HEK293 (cell line): ENCODE measurements at regions of chr15 and their contacts with region 1.

Region 1: GRCh38 chr15:67863442-67863987 is 23.7 kb upstream of the RNU6-1 start:
- H3K4me3 ChIP-seq: peak overlapping the region; percentile 32
- H3K27ac ChIP-seq: peak overlapping the region; percentile 19; the same call in 1 of the 2 replicates
- H3K4me1 ChIP-seq: peaks cover 2% of the 10 kb centered on the region; the same call in 1 of the 2 replicates
- CTCF ChIP-seq: peak; percentile 95

Region 2: DNA sequence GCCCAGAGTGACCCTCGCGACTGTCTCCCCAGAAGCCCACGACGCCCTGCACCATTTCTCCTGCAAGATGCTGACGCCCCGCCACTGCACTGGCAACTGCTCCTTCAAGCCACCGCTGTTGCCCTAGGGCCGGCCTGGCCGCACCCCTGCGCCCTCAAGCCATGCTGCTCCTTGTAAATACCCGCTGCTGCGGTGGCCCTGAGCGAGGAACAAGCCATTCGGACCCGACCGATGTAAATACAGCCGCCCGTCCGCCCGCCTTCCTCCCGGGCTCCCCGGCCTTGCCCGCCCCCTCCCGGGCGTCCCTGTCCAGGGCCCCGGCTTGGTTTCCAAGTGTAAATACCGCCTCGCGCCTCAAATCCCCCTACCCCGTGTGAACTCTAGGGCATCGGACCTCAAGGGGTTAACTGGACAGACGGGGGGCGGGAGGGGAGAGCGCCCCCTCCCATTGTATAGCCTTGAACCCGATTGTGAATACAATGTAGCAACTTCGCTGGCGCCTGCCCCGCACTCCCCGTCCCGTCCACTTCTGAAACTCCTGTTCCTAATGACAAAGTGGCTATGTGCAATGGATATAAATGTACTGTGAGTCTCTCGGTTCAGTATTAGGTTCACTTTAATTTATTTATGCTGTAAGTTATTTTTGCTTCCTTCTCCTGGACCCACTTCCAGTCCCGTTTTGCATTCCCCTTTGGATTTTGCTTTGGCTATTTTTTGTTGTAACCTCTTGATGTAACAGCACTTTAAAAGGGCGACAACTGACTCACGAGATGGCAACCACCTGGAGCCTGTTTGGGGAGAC is 29.6 kb before region 1 on chr15:
- CTCF ChIA-PET with region 1: no interaction called
- POLR2A ChIA-PET with region 1: no interaction called
- H3K4me3 ChIP-seq: no peak overlapping the region
- H3K27ac ChIP-seq: no peak overlapping the region
- H3K4me1 ChIP-seq: no peaks in the 10 kb centered on the region; the same call in 1 of the 2 replicates
- CTCF ChIP-seq: no peak

Region 3: DNA sequence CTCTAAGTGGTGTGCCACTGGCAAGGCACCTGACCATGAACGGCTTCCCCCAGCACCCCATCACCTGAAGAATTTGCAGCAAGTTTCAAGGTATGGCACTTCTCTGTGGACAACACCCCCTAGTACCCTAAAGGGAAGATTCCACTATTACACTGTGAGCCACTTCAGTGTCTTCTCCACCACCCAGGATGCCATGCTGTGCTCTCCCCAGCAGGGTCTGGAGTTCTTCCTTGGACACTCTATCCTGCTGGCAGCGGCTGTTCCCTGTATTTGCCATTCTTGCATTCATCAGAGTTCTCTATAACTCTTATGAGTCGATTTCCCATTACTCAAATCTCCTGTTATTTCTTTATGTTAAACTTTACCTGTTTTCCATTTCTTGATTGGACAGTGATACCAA is 10.3 kb after region 1 on chr15:
- CTCF ChIA-PET with region 1: interaction called, 13 read pairs
- POLR2A ChIA-PET with region 1: no interaction called
- H3K4me3 ChIP-seq: no peak overlapping the region
- H3K27ac ChIP-seq: no peak overlapping the region
- H3K4me1 ChIP-seq: no peaks in the 10 kb centered on the region
- CTCF ChIP-seq: no peak

Region 4: DNA sequence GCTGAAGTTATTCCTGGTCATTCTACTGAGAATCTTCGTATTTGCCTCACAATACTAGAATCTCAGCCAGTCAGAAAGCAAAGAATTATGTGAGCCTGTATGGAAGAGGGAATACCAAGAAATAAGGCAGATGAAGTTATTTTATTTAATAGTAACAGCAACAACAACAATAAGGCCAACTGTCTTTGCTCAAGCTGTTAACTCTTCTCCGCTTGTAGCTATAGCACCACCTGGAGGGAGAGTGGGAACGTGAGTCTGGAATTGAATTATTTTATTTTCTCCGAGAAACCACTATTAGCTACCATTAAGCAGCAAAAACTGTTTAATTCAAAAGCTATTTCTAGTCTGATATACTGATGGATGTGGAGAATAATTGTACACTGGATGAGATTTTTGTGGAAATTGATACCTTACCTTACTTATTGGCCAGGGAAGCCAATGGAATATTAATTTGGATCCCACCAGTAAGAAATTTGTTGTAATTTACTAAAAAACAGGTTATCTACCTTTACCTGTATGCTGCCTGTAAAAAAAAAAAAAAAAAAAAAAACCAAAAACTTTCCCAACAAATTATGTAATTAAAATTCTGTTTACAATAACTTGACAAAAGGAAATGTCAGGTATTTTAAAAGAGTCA is 291.5 kb after region 1 on chr15:
- CTCF ChIA-PET with region 1: interaction called, 65 read pairs
- POLR2A ChIA-PET with region 1: interaction called, 3 read pairs
- H3K4me3 ChIP-seq: no peak overlapping the region
- H3K27ac ChIP-seq: no peak overlapping the region
- H3K4me1 ChIP-seq: no peaks in the 10 kb centered on the region
- CTCF ChIP-seq: peak; percentile 65

Region 5: DNA sequence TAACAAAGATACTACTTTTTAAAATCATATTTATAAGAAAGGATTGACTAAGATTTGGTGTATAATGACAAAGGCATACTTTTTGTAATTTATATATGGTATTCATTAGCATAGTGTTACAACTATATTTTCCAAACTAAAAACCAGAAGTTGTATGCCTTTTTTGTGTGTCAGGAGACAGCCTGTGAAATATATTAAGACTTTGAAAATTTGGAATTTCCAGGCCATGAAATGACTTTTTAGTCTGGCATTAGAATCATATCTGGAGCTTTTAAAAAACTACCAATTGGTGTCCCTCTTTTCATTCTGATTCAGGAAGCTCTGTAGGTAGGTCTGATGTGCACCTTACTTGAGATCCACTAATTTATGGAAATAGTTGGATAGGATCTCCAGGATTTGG is 299.7 kb after region 1 on chr15:
- CTCF ChIA-PET with region 1: interaction called, 12 read pairs
- POLR2A ChIA-PET with region 1: no interaction called
- H3K4me3 ChIP-seq: no peak overlapping the region
- H3K27ac ChIP-seq: no peak overlapping the region
- H3K4me1 ChIP-seq: no peaks in the 10 kb centered on the region
- CTCF ChIP-seq: no peak